Adrenal gland (tissue), 19 donors: ENCODE measurements at regions of chr20 and their contacts with region 1.

Region 1: DNA sequence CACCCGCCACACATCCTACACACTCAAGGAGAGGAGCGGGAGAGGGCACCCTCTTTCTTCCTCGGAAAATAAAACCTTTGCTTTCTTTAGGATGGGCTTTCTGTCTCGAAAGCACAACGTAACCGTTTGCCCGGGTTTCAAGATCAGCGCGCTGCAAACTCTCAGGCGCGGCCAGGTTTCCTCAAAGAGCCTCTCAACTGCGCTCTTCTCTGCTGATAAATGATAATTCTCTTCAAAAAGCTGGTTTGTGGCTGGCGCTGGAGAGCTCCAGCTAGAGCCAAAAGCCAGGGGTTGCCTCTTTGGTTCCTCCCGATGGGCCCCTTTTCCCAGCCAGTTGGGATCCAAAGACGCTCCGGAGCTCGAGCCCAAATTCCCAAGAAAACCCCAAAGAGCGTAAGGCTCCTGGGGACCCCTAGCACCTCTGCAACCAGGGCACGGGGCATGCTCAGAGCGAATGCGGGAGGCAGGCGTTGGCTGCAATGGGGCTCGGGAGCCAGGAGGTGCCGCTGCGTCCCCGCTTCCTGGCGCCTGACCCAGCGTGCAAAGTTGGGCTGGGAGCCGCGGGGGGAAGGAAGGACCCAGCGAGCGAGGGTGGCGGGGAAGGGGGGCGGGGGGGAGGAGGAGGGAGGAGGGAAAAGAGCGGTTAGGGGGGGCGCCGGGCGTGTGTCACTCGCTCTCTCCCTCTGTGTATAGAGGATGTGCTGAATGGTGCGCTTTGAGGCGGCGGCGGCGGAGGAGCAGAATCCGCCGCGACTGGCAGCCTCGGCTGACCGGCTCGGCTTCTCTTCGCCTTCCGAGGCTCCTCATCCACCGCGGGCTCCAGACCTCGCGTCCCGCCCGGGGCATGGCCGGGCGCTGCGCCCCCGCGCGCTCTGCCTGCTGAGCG is at the start of gene PLCB1:
- DNase-seq: peak; percentile 85 to 93 (median 91)
- H3K4me3 ChIP-seq: peak within 1 kb of the TSS; percentile 29 to 88 (median 48)
- H3K27ac ChIP-seq: peak within 1 kb of the TSS in 3 of 5 donors; percentile 60 to 85 (median 74)
- H3K4me1 ChIP-seq: peaks cover 12 to 20% of the 10 kb centered on the region in 2 donors
- H3K27me3 ChIP-seq: no peaks in the 10 kb centered on the region
- CTCF ChIP-seq: peak; percentile 78 to 98 (median 85)
- POLR2A ChIP-seq: no peak
- total RNA-seq, gene PLCB1: 17.6 to 56.6 (median 33.0) TPM

Region 2: DNA sequence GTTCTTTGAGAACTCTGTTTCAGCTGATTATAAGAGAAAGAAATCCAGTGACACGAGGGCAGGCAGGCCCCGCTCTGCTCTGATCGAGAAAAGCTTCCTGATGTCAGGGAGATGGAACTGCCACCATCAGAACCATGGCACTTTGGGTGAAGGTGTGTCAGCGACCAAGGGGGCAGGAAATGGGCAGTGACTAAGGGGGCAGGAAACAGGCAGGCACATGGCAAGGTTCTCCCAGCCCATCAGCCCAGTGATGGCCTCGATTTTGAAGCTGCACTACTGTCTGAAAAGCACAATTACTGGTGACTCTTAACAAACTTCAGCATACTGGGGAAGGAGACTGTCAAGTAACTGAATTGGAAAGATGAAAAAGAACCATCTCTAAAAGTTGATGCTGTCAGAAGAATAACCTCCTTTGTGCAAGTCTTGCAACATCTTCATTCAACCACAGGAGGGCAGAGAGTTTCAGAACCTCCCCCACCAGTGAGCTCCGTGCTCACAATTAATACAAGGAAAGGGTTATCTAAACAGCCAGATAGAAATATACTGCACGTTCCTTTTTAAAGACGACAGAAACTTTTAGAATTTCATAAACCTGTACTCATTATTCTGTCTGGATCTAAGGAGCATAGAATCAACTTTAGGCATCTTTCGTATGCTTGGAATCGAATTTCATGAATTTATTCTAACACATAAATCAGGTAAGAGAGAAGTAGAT is 151.4 kb before region 1 on chr20:
- intact Hi-C with region 1: no loop called
- DNase-seq: peak in 4 of 7 donors; percentile 14 to 26 (median 24)
- H3K4me3 ChIP-seq: no peak overlapping the region
- H3K27ac ChIP-seq: no peak overlapping the region
- H3K4me1 ChIP-seq: no peaks in the 10 kb centered on the region
- H3K27me3 ChIP-seq: no peaks in the 10 kb centered on the region
- CTCF ChIP-seq: peak; percentile 14 to 54 (median 38)
- POLR2A ChIP-seq: no peak

Region 3: GRCh38 chr20:8043687-8044282 is 88.1 kb before region 1 on chr20:
- intact Hi-C with region 1: loop called in 1 of 2 experiments (anchors 10 kb)
- DNase-seq: peak in 2 of 7 donors; percentile 25 to 34
- H3K4me3 ChIP-seq: no peak overlapping the region
- H3K27ac ChIP-seq: no peak overlapping the region
- H3K4me1 ChIP-seq: no peaks in the 10 kb centered on the region
- H3K27me3 ChIP-seq: no peaks in the 10 kb centered on the region
- CTCF ChIP-seq: peak; percentile 56 to 85 (median 73)
- POLR2A ChIP-seq: no peak

Region 4: GRCh38 chr20:8208998-8209440 is 77.2 kb after region 1 on chr20:
- intact Hi-C with region 1: loop called in 1 of 2 experiments (anchors 10 kb)
- DNase-seq: no peak
- H3K4me3 ChIP-seq: peak overlapping the region in 1 of 4 donors; percentile 33
- H3K27ac ChIP-seq: peak overlapping the region in 3 of 5 donors; percentile 15 to 50 (median 46)
- H3K4me1 ChIP-seq: peaks cover 7 to 54% of the 10 kb centered on the region in 2 donors
- H3K27me3 ChIP-seq: no peaks in the 10 kb centered on the region
- CTCF ChIP-seq: no peak
- POLR2A ChIP-seq: no peak

Region 5: DNA sequence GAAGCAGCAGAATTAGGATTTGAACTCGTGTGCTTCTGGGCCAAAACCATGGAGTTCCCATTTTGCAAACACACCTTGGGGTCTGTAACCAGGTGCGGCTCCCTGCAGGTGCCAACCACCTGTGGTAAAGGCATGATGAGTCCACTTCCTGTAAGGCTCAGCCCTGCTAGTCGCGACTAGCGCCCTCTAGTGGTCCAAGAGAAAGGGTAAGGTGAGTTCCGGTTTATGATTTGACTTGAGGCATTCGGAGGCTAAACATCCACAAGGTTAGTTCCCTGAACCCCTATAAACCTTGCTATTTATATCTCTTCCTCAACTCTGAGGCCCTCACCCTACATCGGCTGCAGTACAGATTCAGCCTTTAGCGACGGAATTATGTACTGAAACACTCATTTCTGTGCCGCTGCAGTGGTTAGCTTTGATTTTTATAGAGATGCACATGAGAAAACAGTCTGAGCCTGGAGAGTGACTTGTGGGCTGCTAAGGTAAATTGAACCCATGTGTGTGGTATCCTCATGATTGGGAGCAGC is 173.7 kb after region 1 on chr20:
- intact Hi-C with region 1: loop called in 1 of 2 experiments (anchors 10 kb)
- DNase-seq: peak in 6 of 7 donors; percentile 18 to 67 (median 38)
- H3K4me3 ChIP-seq: no peak overlapping the region
- H3K27ac ChIP-seq: no peak overlapping the region
- H3K4me1 ChIP-seq: peaks cover 0 to 7% of the 10 kb centered on the region in 2 donors
- H3K27me3 ChIP-seq: no peaks in the 10 kb centered on the region
- CTCF ChIP-seq: peak in 5 of 6 experiments; percentile 28 to 51 (median 46)
- POLR2A ChIP-seq: no peak

Region 6: DNA sequence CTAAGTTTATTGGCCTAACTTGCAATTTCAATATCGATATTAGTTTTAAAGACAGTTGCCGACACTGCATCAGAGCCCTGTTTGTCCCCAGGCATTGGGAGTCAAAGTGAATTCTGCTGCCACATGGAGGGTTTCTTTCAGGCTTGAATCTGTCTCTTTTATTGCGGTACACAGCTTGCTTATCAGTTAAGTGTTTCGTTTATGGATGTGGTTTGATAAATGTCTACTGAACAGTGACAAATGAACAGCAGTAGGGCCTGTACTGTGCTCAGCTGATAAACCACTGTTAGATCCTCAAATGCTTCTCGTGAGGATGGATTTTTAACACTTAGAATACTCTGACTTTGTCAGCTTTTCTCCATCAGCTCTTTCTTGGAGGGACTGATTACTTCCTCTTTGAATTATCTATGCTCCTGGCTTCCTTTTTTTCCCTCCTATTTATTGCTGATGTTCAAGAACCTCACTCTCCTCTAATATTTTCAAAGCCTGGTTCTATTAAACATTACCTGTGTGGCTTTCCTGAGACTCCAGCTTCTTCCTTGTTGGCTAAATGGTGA is 241.1 kb after region 1 on chr20:
- intact Hi-C with region 1: loop called in 1 of 2 experiments (anchors 10 kb)
- DNase-seq: no peak
- H3K4me3 ChIP-seq: no peak overlapping the region
- H3K27ac ChIP-seq: no peak overlapping the region
- H3K4me1 ChIP-seq: no peaks in the 10 kb centered on the region
- H3K27me3 ChIP-seq: no peaks in the 10 kb centered on the region
- CTCF ChIP-seq: no peak
- POLR2A ChIP-seq: no peak

Region 7: GRCh38 chr20:8389381-8390036 is 257.7 kb after region 1 on chr20:
- intact Hi-C with region 1: loop called in 1 of 2 experiments (anchors 5 kb)
- DNase-seq: no peak
- H3K4me3 ChIP-seq: no peak overlapping the region
- H3K27ac ChIP-seq: no peak overlapping the region
- H3K4me1 ChIP-seq: peaks cover 0 to 9% of the 10 kb centered on the region in 2 donors
- H3K27me3 ChIP-seq: no peaks in the 10 kb centered on the region
- CTCF ChIP-seq: peak; percentile 36 to 68 (median 62)
- POLR2A ChIP-seq: no peak

Region 8: GRCh38 chr20:8722276-8722928 is 590.6 kb after region 1 on chr20:
- intact Hi-C with region 1: loop called in 1 of 2 experiments (anchors 5 kb)
- DNase-seq: peak; percentile 26 to 65 (median 46)
- H3K4me3 ChIP-seq: no peak overlapping the region
- H3K27ac ChIP-seq: no peak overlapping the region
- H3K4me1 ChIP-seq: no peaks in the 10 kb centered on the region
- H3K27me3 ChIP-seq: no peaks in the 10 kb centered on the region
- CTCF ChIP-seq: peak; percentile 73 to 90 (median 86)
- POLR2A ChIP-seq: no peak